ENCODE measurements at regions of chr22 and their contacts with region 1.

Region 1: DNA sequence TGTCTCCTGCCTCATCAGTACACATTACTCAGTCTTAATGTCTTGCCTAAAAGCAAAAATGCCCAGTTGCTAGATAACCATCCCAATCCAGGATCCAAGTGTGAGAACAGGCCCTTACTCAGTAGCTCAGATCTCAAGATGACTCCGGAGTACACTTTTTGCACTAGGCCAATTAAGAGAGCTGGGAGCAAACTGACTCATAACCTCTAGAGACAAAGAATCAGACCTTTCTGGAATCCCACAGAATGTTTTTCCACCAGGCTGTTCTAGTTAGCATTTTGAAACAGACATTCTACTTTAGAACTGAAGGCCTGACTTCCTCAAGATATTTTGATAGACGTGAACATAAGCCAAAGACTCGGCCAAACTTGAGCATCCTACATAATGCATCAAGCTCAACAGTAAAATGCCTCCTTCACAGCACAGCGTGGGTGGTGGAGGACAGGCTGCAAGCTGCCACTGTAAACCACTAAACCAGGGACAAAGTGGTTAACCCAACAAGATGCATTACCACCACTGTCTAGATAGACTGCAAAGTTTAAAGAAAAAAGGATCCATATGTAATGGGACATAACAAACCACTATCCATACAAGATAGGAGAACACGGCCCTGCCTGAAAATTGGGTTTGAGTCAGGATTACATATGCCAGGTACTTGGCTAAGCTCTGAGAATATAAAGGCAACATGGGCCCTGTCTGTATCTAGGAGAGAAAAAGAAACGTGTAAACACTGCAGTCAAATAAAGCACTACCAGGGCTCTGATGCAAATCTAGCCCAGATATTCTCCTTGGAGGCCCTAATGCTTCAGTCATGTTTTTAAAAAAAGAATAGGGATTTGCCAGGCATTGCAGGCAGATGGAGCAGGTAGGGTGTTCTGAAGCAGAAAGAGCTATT is 48.3 kb downstream of the MYH9 start:
- DNase-seq: peak; percentile 79
- H3K4me3 Mint-ChIP-seq: peak overlapping the region; percentile 57
- H3K27ac Mint-ChIP-seq: peak overlapping the region; percentile 89
- H3K4me1 Mint-ChIP-seq: peaks cover 82% of the 10 kb centered on the region
- H3K27me3 Mint-ChIP-seq: no peaks in the 10 kb centered on the region

Region 2: DNA sequence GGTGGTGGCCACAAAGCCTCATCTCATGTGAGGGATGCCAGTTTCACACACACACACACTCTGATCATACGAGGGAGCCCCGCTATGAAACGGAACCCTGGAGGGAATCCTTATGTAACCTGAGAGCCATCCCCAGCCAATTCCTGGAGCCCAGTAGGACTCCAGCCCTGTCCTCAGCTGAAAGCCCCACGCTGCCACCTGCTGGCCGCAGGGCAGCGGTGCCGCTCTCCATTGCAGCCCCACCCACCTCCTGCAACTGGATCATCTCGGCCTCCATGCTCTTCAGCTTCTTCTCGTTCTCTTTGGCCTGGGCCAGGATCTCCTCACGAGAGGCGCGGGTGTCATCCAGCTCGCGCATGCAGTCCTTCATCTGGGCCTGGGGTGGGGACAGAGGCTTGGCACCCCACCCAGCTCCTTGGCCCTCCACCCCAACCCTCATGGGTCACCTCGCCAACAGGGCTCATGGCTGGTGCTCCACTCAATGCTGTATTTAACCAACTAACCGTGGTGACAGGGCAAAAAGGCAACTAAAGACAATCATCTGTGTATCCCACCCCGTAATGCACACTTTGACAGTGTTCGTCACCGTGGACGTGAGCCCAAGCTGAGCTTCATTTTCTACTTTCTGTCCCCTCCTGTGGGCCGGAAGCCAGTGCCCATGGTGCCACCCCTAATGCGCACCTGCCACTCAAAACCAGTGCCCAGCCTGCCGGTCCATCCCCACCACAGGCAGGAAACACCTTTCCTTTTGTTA is 52.8 kb before region 1 on chr22:
- intact Hi-C with region 1: no loop called
- DNase-seq: peak; percentile 91
- H3K4me3 Mint-ChIP-seq: no peak overlapping the region
- H3K27ac Mint-ChIP-seq: peak overlapping the region; percentile 39
- H3K4me1 Mint-ChIP-seq: peaks cover 17% of the 10 kb centered on the region
- H3K27me3 Mint-ChIP-seq: no peaks in the 10 kb centered on the region

Region 3: DNA sequence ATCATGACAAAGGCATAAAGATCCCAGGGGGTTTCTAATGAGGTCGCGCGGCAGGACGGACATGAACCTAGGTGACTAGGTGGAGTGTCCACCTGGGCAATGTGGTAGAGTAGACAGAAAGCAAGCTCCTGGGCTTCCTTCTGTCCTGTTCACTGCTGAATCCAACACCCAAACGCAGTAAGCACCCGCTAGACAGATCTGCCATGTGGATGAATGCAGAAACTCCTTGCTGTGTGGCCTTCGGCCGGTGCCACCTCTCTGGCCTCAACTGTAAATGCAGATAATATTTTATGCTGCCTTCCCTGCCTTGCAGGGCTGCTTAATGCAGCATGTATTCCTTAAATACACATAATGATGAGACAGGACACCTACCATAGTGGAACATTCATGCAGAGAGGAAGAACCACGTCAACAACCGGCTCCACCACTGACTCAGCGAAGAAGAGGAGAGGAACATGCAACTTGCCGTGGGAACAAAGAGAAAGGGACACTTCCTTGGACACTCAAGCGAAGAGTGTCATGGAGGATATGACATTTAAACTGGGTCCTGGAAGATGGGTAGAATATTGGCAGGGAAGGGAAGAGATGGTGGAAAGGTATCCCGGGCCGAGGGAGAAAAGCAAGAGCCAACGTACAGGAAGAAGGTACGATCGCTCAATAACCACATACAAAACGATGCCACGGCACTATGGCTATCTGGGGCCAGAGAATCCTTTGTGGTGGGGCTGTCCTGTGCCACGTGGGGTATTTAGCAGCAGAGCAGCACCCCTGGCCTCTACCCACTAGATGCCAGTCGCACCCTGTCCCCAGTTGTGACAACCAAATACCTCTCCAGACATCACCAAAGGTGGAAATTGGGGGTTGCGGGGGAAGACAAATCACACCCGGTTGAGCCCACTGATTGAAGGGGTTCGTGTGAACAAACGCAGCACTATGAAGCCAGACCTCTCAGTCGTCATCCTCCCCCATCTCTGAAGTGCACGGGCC is 17.6 kb after region 1 on chr22:
- intact Hi-C with region 1: loop called (anchors 1 kb)
- DNase-seq: peak; percentile 78
- H3K4me3 Mint-ChIP-seq: peak overlapping the region; percentile 67
- H3K27ac Mint-ChIP-seq: peak overlapping the region; percentile 85
- H3K4me1 Mint-ChIP-seq: peaks cover 74% of the 10 kb centered on the region
- H3K27me3 Mint-ChIP-seq: no peaks in the 10 kb centered on the region

Region 4: GRCh38 chr22:36365020-36365411 is 25.6 kb after region 1 on chr22:
- intact Hi-C with region 1: loop called (anchors 1 kb)
- DNase-seq: peak; percentile 95
- H3K4me3 Mint-ChIP-seq: peak overlapping the region; percentile 79
- H3K27ac Mint-ChIP-seq: peak overlapping the region; percentile 89
- H3K4me1 Mint-ChIP-seq: peaks cover 83% of the 10 kb centered on the region
- H3K27me3 Mint-ChIP-seq: no peaks in the 10 kb centered on the region

Measured in activated CD4-positive, alpha-beta T cell treated with anti-CD3 and anti-CD28 coated beads, Interleukin-2, amount 10 ng/mL, durations not matched to agents 24 days and 14 days (primary cell).